Tibial artery (tissue), 4 donors: ENCODE measurements at regions of chr5 and their contacts with region 1.

Region 1: DNA sequence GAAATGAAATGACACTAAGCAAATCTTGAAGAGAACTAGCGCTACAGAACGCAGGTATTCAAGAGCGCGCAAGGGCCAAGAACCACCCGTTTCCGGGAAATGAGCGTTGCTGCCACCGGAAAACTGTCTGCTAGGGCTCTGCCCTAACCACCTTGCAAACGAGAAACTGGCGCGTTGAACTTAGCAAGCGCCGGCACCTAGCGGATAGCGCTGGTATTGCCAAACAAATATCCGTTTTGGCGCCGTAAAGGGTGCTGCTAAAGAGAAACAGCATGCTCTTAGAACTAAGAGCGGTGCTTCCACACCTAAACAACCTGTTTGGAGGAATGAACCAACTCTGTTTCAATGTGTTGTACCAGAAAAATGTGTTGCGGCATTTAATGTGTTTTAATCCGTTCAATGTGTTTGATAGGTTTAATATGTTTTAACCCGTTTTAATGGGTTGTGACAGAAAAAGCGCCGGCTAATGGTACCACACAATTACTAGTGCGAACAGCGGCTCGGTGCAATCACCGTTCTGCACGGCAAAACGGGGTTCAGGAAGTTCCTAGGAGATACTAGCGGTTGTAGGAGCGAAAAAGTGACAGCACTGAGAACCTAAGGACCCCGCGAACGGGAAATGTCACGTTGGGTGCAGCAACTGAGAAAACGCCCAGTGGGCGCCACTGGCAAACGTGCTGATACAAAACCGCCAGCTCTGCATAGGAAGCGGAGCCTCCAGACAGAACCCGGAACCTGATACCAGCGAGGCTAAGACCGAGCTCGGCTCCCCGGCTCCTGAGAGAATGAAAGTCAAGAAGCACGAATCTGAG is at the start of gene ANXA2R:
- DNase-seq: peak; percentile 88 to 94
- H3K4me3 ChIP-seq: peak within 1 kb of the TSS; percentile 72 to 77
- H3K27ac ChIP-seq: peak within 1 kb of the TSS; percentile 98
- H3K4me1 ChIP-seq: peaks cover 0 to 13% (median 2%) of the 10 kb centered on the region in 4 donors
- H3K27me3 ChIP-seq: no peaks in the 10 kb centered on the region
- CTCF ChIP-seq: peak; percentile 85 to 86

Region 2: DNA sequence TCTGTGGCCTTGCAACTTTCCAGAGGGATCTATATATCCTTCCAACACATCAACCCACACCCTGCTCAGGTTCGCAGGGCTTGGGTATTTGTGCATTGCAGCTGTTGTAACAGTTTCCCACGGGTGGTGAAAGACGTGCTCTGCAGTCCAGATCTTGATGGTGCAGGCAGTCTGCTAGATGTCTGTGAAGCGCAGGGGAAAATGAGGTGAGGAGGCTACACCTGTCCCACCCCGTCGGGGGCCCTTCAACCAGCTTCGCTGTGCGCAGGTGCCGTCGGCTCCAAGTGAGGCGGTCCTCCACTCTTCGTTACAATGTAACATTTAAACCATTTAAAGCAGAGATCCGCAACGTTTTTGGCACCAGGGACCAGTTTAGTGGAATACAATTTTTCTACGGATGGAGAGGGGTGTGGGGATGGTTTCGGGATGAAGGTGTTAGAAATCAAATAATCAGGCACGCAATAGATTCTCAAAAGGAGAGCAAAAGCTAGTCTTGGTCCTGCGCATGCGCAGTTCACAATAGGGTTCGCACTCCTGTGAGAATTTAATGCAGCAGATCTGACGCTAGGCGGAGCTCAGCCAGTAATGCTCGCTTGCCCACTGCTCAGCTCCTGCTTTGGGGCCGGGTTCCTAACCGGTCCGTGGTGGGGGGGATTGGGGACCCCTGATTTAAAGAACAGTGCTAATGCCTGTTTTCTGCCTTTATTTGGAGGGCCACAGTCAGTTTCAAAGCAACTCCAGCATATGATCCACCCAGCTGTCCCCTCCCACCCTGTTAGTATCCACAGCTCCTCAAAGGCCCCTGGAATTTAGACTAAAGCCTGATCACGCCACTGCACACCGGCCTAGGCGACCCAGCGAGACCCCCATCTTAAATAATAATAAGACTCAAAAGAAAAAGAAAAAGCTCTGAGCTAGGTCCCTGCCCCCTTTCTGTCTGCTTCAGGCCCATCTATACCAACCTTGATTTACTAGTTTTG is 131.7 kb before region 1 on chr5:
- intact Hi-C with region 1: loop called (anchors 10 kb)
- DNase-seq: peak; percentile 86 to 90
- H3K4me3 ChIP-seq: peak overlapping the region; percentile 47 to 48
- H3K27ac ChIP-seq: peak overlapping the region in 1 of 2 donors; percentile 25
- H3K4me1 ChIP-seq: peaks cover 0 to 8% (median 2%) of the 10 kb centered on the region in 4 donors
- H3K27me3 ChIP-seq: peaks cover 0 to 2% of the 10 kb centered on the region in 2 donors
- CTCF ChIP-seq: peak; percentile 85 to 86

Region 3: GRCh38 chr5:42950440-42951292 is 89.8 kb before region 1 on chr5:
- intact Hi-C with region 1: loop called (anchors 5 kb)
- DNase-seq: peak; percentile 81 to 90
- H3K4me3 ChIP-seq: peak overlapping the region; percentile 56 to 60
- H3K27ac ChIP-seq: peak overlapping the region; percentile 78 to 92
- H3K4me1 ChIP-seq: peaks cover 0 to 36% (median 13%) of the 10 kb centered on the region in 4 donors
- H3K27me3 ChIP-seq: peaks cover 0 to 3% of the 10 kb centered on the region in 2 donors
- CTCF ChIP-seq: peak in 1 of 2 experiments; percentile 16

Region 4: GRCh38 chr5:42994246-42995151 is 46.0 kb before region 1 on chr5:
- intact Hi-C with region 1: loop called (anchors 2 kb)
- DNase-seq: peak; percentile 87 to 94
- H3K4me3 ChIP-seq: peak overlapping the region; percentile 61 to 77
- H3K27ac ChIP-seq: peak overlapping the region; percentile 92 to 97
- H3K4me1 ChIP-seq: peaks cover 0 to 5% (median 2%) of the 10 kb centered on the region in 4 donors
- H3K27me3 ChIP-seq: no peaks in the 10 kb centered on the region
- CTCF ChIP-seq: peak; percentile 87 to 96

Region 5: DNA sequence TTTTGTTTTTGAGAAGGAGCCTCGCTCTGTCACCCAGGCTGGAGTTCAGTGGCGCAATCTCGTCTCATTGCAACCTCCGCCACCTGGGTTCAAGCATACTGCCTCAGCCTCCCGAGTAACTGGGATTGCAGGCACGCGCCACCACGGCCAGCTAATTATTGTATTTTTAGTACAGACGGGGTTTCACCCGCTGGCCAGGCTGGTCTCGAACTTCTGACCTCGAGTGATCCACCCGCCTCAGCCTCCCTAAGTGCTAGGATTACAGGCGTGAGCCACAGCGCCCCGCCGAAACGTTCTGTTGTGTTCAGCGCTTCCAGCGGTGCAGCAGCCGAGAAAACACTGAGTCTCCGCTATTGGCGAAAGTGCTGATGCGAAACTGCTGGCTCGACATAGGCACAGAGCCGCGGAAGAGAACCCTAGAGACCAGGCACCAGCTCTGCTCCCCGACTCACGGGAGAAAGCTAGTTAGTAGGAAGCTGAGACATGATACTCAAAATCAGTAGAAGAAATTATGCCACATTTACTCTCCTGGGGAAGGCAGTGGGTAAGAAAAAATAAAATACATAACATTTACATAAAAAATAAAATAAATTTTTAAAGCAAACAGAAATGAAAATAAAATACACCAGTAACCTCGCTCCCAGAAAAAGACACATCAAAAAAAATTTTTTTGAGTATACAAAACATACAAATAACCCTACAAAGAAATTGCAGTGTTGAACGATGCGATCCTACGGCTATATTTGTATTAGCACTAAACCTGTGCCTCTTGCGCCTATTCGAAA is 31.9 kb before region 1 on chr5:
- intact Hi-C with region 1: loop called (anchors 5 kb)
- DNase-seq: peak; percentile 89 to 94
- H3K4me3 ChIP-seq: peak overlapping the region; percentile 53 to 77
- H3K27ac ChIP-seq: peak overlapping the region; percentile 84 to 85
- H3K4me1 ChIP-seq: peaks cover 0 to 18% (median 5%) of the 10 kb centered on the region in 4 donors
- H3K27me3 ChIP-seq: no peaks in the 10 kb centered on the region
- CTCF ChIP-seq: no peak

Region 6: DNA sequence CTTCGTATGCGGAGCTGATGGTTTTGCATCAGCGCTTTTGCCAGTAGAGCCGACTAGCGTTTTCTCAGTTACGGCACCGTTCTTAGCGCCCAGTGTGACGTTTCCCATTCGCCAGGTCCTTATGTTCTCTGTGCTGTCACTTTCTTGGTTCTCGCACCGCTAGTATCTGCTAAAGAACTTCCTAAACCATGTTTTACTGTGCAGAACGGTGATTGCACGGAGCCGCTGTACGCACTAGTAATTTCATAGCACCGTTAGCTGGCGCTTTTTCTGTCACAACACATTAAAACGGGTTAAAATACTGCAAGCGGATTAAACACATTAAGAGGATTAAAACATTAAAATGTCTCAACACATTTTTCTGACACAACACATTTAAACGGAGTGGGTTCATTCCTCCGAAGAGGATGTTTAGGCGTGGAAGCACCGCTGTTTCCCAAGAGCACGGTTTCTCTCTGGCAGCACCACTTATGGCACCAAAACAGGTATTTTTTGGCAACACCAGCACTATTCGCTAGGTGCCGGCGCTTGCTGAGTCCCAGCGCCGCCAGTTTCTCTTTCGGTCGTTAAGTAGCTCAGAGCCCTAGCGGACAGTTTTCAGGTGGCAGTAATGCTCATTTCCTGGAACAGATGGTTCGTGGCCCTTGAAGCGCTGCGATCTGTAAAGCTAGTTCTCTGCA is 20.7 kb before region 1 on chr5:
- intact Hi-C with region 1: loop called (anchors 2 kb)
- DNase-seq: no peak
- H3K4me3 ChIP-seq: peak overlapping the region; percentile 58 to 64
- H3K27ac ChIP-seq: peak overlapping the region; percentile 93 to 95
- H3K4me1 ChIP-seq: peaks cover 0 to 10% (median 7%) of the 10 kb centered on the region in 4 donors
- H3K27me3 ChIP-seq: no peaks in the 10 kb centered on the region
- CTCF ChIP-seq: peak; percentile 29 to 31

Region 7: GRCh38 chr5:43066799-43067741 is 26.6 kb after region 1 on chr5:
- intact Hi-C with region 1: loop called (anchors 2 kb)
- DNase-seq: peak; percentile 93
- H3K4me3 ChIP-seq: peak overlapping the region; percentile 87 to 90
- H3K27ac ChIP-seq: peak overlapping the region; percentile 99 to 100
- H3K4me1 ChIP-seq: peaks cover 0 to 43% (median 32%) of the 10 kb centered on the region in 4 donors
- H3K27me3 ChIP-seq: no peaks in the 10 kb centered on the region
- CTCF ChIP-seq: no peak

Region 8: DNA sequence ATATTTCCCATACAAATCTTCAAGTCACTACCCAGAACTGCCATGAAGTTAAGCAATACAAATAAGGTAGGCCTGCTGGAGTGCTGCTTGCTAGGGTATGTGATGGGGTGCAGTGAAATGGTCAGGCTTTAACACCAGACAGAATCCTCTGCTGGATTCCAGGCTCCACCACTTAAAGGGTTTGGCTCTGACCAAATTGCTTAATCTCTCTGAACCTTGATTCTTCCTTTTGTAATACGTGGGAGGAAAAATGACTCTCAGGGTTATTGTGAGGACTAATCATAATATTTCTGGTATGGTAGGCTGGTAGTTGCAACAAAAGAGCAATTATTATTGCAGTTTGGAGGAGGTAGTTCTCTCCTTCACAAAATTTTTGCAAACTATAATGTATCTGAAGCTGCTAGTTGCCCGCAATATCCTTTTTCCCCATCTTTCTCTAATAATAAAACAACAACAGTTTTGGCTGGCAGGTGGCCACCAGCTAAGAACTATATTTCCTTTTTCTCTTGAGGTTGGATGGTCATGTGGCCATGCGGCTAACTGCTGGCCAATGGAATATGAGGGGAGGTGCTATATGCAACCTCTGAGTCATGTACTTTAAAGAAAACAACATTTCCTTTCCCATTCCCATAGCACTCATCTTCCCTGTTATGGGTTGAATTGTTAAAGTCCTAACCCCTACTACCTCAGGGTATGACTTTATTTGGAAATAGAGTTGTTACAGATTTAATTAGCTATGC is 327.6 kb after region 1 on chr5:
- intact Hi-C with region 1: no loop called
- DNase-seq: no peak
- H3K4me3 ChIP-seq: no peak overlapping the region
- H3K27ac ChIP-seq: no peak overlapping the region
- H3K4me1 ChIP-seq: no peaks in the 10 kb centered on the region
- H3K27me3 ChIP-seq: no peaks in the 10 kb centered on the region
- CTCF ChIP-seq: no peak